ENCODE measurements at regions of chr16 and their contacts with region 1.

Region 1: DNA sequence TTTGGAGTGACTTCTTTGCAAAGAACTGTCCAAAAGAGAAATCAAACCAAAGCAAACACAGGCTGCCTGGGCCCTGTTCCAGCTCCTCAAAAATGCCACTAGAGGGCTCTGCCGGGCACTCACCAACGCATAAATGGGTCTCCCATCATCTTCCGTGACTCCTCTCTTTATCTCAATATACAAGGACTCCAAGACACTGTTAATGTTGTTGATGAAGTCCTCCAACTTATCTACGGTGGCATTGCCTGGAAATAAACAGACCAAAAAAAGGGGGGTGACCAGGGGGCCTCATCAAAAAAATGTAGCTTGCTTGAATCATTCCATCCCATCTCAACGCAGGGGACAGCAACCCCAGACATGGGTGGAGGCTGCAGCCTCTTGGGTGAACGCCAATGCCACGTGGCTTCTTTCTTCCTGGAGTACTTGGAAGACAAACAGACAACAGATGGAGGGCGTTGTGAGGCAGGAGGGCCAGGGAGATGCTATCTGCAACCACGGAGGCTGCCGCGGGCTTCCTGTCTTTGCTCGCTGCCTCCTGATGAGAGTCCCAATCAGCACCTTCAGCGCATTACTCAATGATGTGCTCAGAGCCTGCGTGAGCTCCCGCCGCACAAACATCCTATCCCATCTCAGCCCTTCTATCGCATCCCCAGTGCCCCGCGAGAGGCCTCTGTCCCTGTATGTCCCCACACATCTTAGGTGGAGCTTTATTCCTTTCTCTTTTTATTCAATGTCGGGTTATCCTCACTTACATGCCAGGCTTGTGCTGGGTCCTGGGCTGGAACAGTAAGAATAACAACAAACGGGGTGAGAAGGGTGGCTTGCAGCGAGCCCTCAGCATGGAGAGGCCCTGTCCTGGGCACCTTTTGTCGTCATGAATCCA is 32.0 kb downstream of the KDM8 start:
- DNase-seq: peak; percentile 81 to 98 (median 94)
- ATAC-seq: peak; percentile 68
- H3K4me3 ChIP-seq: peak overlapping the region; percentile 1
- H3K4me3 Mint-ChIP-seq: peak overlapping the region; percentile 83
- H3K27ac ChIP-seq: peak overlapping the region; percentile 94 to 95
- H3K27ac Mint-ChIP-seq: peak overlapping the region; percentile 95
- H3K4me1 ChIP-seq: peaks cover 94% of the 10 kb centered on the region
- H3K4me1 Mint-ChIP-seq: peaks cover 91% of the 10 kb centered on the region
- H3K27me3 ChIP-seq: no peaks in the 10 kb centered on the region
- H3K27me3 Mint-ChIP-seq: no peaks in the 10 kb centered on the region
- CTCF ChIP-seq: peak; percentile 83

Region 2: DNA sequence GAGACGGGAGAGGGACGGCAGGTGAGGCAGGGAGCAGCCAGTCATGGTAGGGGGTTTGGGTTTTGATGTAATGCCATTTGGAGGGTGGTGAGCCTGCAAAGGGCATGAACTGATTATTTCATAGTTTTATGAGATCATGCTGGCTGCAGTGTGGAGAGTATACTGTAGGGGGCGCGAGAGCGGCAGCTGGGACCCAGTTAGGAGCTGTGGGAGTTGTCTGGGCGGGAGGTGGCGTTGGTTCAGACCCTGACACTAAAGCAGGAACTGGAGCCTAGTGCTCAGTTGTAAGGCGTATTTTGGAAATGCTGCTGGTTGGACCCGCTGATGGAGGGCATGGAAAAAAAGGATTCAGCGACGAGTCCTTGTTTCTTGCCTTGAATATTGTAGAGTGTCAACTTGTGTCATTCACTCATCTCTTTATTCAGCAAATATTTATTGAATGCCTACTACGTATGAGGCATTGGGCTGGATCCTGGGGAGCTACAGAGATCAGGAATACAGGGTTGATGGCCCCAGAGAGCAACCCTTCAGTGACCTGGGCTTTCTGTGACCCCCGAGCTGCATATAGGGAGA is 55.7 kb before region 1 on chr16:
- CTCF ChIA-PET with region 1: interaction called, 57 read pairs
- POLR2A ChIA-PET with region 1: interaction called, 24 read pairs
- intact Hi-C with region 1: loop called (anchors 1 to 5 kb)
- DNase-seq: peak; percentile 83 to 95 (median 86)
- ATAC-seq: peak; percentile 99
- H3K4me3 ChIP-seq: no peak overlapping the region
- H3K4me3 Mint-ChIP-seq: no peak overlapping the region
- H3K27ac ChIP-seq: no peak overlapping the region
- H3K27ac Mint-ChIP-seq: peak overlapping the region; percentile 72
- H3K4me1 ChIP-seq: peaks cover 35% of the 10 kb centered on the region
- H3K4me1 Mint-ChIP-seq: peaks cover 55% of the 10 kb centered on the region
- H3K27me3 ChIP-seq: no peaks in the 10 kb centered on the region
- H3K27me3 Mint-ChIP-seq: no peaks in the 10 kb centered on the region
- CTCF ChIP-seq: peak; percentile 84

Region 3: DNA sequence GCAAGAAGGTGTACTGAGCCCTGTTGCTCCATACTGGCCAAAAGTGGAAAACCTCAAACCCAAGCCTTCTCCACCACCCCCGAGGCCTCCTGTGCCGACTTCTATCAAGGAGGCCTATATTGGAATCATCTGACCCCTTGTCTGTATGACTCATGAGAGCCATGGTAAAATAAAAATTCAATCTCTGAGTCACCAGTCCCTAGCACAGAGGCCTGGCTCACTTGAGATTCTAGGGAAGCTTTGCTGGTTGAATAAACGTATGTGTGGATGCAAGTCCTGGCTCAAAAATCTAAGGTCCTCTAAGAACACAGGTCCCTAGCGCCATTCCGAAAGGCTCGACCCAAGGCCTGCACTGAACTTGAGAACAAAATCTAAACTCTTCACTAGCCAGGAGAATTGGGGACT is 18.2 kb after region 1 on chr16:
- CTCF ChIA-PET with region 1: interaction called, 28 read pairs
- POLR2A ChIA-PET with region 1: interaction called, 9 read pairs
- intact Hi-C with region 1: no loop called
- DNase-seq: no peak
- ATAC-seq: no peak
- H3K4me3 ChIP-seq: no peak overlapping the region
- H3K4me3 Mint-ChIP-seq: peak overlapping the region; percentile 61
- H3K27ac ChIP-seq: no peak overlapping the region
- H3K27ac Mint-ChIP-seq: peak overlapping the region; percentile 56
- H3K4me1 ChIP-seq: peaks cover 26% of the 10 kb centered on the region
- H3K4me1 Mint-ChIP-seq: peaks cover 68% of the 10 kb centered on the region
- H3K27me3 ChIP-seq: no peaks in the 10 kb centered on the region
- H3K27me3 Mint-ChIP-seq: no peaks in the 10 kb centered on the region
- CTCF ChIP-seq: no peak

Region 4: DNA sequence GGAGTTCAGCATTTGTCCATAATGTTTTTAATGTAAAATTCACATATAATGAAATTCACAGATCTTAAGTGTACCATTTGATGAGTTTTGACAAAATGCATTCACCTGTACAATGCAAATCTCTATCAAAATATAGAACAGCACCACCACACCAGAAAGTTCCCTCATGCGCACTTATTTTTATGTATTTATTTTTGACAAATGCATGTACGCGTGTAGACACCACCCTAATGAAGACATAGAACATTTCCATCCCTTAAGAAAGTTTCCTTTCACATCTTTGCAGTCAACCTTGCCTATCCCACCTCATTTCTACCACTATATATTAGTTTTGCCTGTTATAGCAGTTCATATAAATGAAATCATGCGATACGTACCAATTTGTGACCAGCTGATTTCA is 62.8 kb after region 1 on chr16:
- CTCF ChIA-PET with region 1: interaction called, 11 read pairs
- POLR2A ChIA-PET with region 1: no interaction called
- intact Hi-C with region 1: no loop called
- DNase-seq: no peak
- ATAC-seq: no peak
- H3K4me3 ChIP-seq: no peak overlapping the region
- H3K4me3 Mint-ChIP-seq: no peak overlapping the region
- H3K27ac ChIP-seq: no peak overlapping the region
- H3K27ac Mint-ChIP-seq: no peak overlapping the region
- H3K4me1 ChIP-seq: no peaks in the 10 kb centered on the region
- H3K4me1 Mint-ChIP-seq: peaks cover 9% of the 10 kb centered on the region
- H3K27me3 ChIP-seq: no peaks in the 10 kb centered on the region
- H3K27me3 Mint-ChIP-seq: no peaks in the 10 kb centered on the region
- CTCF ChIP-seq: no peak

Region 5: GRCh38 chr16:27355610-27356009 is 120.3 kb after region 1 on chr16:
- CTCF ChIA-PET with region 1: interaction called, 12 read pairs
- POLR2A ChIA-PET with region 1: interaction called, 4 read pairs
- intact Hi-C with region 1: no loop called
- DNase-seq: peak in 12 of 14 experiments; percentile 23 to 75 (median 46)
- ATAC-seq: peak; percentile 76
- H3K4me3 ChIP-seq: no peak overlapping the region
- H3K4me3 Mint-ChIP-seq: no peak overlapping the region
- H3K27ac ChIP-seq: no peak overlapping the region
- H3K27ac Mint-ChIP-seq: peak overlapping the region; percentile 84
- H3K4me1 ChIP-seq: no peaks in the 10 kb centered on the region
- H3K4me1 Mint-ChIP-seq: peaks cover 17% of the 10 kb centered on the region
- H3K27me3 ChIP-seq: no peaks in the 10 kb centered on the region
- H3K27me3 Mint-ChIP-seq: no peaks in the 10 kb centered on the region
- CTCF ChIP-seq: peak; percentile 23

Region 6: GRCh38 chr16:27408012-27408601 is 172.8 kb after region 1 on chr16:
- CTCF ChIA-PET with region 1: interaction called, 25 read pairs
- POLR2A ChIA-PET with region 1: interaction called, 16 read pairs
- intact Hi-C with region 1: no loop called
- DNase-seq: peak in 6 of 14 experiments; percentile 20 to 57 (median 50)
- ATAC-seq: peak; percentile 24
- H3K4me3 ChIP-seq: peak overlapping the region; percentile 2
- H3K4me3 Mint-ChIP-seq: peak overlapping the region; percentile 72
- H3K27ac ChIP-seq: peak overlapping the region; percentile 9 to 39
- H3K27ac Mint-ChIP-seq: peak overlapping the region; percentile 90
- H3K4me1 ChIP-seq: peaks cover 56% of the 10 kb centered on the region
- H3K4me1 Mint-ChIP-seq: peaks cover 96% of the 10 kb centered on the region
- H3K27me3 ChIP-seq: no peaks in the 10 kb centered on the region
- H3K27me3 Mint-ChIP-seq: no peaks in the 10 kb centered on the region
- CTCF ChIP-seq: no peak